GM10248 (cell line): ENCODE measurements at regions of chr4 and their contacts with region 1.

Region 1: DNA sequence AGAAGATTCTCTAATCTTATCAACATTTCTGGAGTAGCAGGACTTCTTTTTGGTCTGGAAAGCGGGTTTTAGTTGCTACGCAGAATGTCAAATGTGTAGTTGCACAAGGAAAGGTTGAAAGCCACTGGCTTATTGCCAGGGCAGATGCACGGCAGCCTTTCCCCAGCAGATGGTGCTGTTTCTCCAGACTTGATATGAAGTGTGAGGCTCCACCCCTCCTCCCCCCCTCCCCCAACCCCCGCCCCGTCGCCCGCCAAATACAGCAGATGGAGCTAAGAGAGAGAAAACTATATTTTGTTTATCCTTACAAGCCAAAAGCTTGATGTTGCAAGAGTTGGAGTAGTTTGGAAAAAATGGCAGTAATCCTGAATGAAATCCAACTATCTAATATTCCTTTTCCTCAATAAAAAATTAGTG is 32.0 kb downstream of the ENOPH1 start:
- DNase-seq: peak; percentile 75
- CTCF ChIP-seq: peak; percentile 87

Region 2: GRCh38 chr4:82437285-82438005 is 25.0 kb before region 1 on chr4:
- CTCF ChIA-PET with region 1: interaction called, 10 read pairs
- POLR2A ChIA-PET with region 1: no interaction called
- DNase-seq: no peak
- CTCF ChIP-seq: no peak

Region 3: DNA sequence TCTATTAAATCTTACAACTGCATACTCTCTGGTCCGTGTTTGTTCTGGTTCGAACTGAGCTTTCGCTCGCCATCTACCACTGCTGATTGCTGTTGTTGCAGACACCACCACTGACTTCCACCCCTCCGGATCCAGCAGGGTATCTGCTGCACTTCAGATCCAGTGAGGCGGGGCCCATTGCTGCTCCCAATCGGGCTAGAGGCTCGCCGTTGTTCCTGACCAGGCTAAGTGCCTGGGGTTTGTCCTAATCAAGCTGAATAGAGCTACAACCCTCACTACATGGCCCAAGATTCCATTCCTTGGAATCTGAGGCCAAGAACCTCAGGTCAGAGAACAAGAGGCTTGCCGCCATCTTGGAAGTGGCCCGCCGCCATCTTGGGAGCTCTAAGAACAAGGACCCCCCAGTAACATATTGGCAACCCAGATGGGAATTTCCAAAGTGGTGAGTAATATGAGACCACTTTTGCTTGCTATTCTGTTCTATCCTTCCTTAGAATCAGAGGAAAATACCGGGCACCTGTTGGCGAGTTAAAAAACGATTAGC is 11.3 kb after region 1 on chr4:
- CTCF ChIA-PET with region 1: interaction called, 16 read pairs
- POLR2A ChIA-PET with region 1: no interaction called
- DNase-seq: no peak
- CTCF ChIP-seq: no peak

Region 4: DNA sequence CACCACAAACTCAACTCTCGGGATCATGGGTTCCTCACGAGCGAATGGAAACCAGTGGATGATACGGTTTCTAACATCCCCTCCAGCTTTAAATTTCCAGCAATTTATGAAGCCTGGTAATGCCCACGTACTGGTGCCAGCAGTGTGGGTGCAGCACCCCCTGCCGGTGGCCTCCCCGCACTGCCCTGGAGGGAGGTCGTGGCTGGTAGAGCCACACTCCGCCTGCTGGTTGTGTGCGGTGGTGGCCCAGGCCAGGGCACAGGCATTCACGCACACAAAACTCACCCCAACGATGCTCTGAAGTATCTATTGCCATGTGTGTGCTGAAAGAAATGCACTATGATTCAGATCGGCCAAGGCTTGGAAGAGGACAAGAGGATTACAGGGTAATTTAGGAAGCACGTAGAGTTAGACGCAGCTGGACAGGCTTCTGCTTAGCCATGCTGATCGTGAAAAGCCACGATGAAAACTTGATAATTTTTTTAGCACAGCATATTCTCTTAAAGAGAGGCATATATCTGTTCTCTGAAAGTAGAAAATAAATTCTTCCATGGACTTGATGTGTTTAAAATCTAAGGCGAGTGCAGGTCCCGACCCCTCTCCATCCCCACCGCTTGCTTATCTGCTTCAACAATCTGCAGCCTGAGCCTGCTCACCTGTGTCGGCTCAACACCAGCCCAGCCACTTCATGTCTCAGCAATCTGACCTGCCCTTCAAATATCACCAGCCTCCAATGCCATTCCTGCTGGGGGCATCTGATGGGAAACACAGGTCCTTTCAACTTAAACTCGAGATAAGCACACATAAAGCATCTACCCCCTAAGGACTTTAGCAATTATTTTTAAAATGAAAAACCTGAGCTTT is 277.1 kb after region 1 on chr4:
- CTCF ChIA-PET with region 1: interaction called, 29 read pairs
- POLR2A ChIA-PET with region 1: no interaction called
- DNase-seq: peak; percentile 78
- CTCF ChIP-seq: peak; percentile 85